ENCODE measurements at regions of chr12 and their contacts with region 1.

Region 1: DNA sequence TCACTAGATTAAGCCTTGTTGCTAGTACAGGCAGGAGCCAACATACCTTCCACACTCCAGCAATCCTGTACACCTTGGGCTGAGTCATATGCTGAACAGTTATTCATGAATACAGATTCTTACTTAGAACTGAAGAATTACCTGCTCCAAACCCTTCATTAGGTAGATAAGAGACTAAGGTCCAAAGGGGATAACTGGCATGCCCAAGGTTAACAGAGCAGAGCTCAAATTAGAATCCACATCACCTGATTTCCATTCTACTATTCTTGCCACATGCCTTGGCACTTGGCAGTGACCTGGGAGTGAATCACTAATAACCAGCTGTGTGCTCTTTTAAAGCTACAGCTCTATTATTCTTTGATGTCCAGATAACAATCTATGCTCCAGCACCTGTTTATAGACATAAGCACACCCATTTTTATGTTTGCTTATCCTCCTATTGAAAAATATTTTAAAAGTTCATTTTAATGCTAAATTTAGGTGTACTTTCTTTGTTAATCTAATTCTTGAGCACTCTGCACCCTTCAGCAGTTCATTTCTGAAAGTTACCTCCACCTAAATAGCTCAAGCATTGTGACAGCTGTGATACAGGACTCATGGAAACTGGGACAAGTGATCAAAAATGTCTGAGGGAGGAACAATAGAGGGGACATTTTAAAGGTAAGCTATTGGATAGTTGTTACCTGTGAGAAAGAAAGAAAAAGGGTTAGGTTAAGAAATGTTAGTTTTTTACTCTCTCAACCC is 19.4 kb downstream of the LPCAT3 start:
- DNase-seq: peak; percentile 63 to 81
- ATAC-seq: peak; percentile 94 to 99
- H3K4me3 ChIP-seq: no peak overlapping the region
- H3K27ac ChIP-seq: peak overlapping the region; percentile 88 to 91 (median 88)
- H3K4me1 ChIP-seq: peaks cover 57 to 62% of the 10 kb centered on the region in 2 donors
- H3K27me3 ChIP-seq: no peaks in the 10 kb centered on the region
- CTCF ChIP-seq: no peak
- POLR2A ChIP-seq: no peak

Region 2: GRCh38 chr12:7018350-7019042 is 19.6 kb after region 1 on chr12 and contains the start of gene LPCAT3:
- in situ Hi-C with region 1: no loop called
- intact Hi-C with region 1: loop called (anchors 1 kb)
- DNase-seq: peak; percentile 94 to 98
- ATAC-seq: peak; percentile 92 to 95
- H3K4me3 ChIP-seq: peak within 1 kb of the TSS; percentile 81 to 95 (median 84)
- H3K27ac ChIP-seq: peak within 1 kb of the TSS; percentile 91 to 98 (median 95)
- H3K4me1 ChIP-seq: peaks cover 35 to 36% of the 10 kb centered on the region in 2 donors
- H3K27me3 ChIP-seq: no peaks in the 10 kb centered on the region
- CTCF ChIP-seq: peak; percentile 79 to 93 (median 89)
- POLR2A ChIP-seq: peak; percentile 81 to 88
- total RNA-seq, gene LPCAT3: 19.4 to 42.8 (median 36.7) TPM

Region 3: DNA sequence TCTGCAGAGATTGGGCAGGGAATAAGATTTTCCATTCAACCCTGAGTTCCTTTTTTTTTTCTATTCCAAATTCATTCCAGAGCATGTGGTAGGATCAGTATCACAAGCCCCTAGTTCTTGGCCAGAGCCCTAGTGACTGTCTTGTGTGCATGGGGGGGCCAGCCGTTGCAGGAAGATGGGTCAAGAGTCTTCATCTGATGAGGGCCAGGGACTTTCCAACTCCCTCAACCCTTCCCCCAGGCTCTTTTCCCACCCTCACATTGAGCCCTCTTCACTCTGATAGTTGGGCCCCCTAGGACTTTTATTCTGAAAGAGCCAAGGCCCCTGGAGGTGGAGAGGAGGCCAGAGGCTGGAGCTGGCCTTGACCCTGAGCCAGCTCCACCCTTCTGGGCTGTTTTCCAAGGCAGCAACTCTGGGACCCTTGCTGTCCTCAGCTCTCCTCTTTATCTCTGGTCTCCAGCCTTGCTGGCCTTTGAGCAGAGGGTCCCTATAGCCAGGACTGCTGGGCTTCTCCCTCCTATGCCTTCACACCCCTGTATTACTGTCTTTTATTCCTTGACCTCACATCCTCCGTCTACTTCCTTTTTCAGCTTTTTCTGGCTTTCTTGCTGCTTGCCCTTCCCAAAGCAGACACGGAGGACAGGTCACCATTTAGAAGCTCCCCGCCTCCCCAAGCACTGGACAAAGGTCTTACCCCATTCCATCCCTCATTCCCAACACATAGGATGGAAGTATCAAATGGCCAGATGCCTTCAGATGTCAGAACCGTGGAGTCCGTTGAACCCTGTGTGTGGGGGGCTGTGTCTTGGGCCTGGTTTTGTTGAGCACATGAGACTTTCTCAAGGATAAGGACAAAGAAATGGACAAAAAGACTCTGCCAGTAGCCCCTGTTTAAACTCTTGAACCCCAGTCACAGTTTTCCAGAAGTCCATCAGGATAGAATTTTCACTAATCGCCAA is 124.2 kb after region 1 on chr12:
- in situ Hi-C with region 1: no loop called
- intact Hi-C with region 1: no loop called
- DNase-seq: no peak
- ATAC-seq: no peak
- H3K4me3 ChIP-seq: no peak overlapping the region
- H3K27ac ChIP-seq: peak overlapping the region in 2 of 4 donors; percentile 15 to 33
- H3K4me1 ChIP-seq: peaks cover 5 to 11% of the 10 kb centered on the region in 2 donors
- H3K27me3 ChIP-seq: peaks cover 0 to 7% (median 0%) of the 10 kb centered on the region in 3 donors
- CTCF ChIP-seq: no peak
- POLR2A ChIP-seq: no peak

Region 4: GRCh38 chr12:7229741-7230140 is 230.9 kb after region 1 on chr12:
- in situ Hi-C with region 1: no loop called
- intact Hi-C with region 1: no loop called
- DNase-seq: no peak
- ATAC-seq: no peak
- H3K4me3 ChIP-seq: no peak overlapping the region
- H3K27ac ChIP-seq: no peak overlapping the region
- H3K4me1 ChIP-seq: no peaks in the 10 kb centered on the region
- H3K27me3 ChIP-seq: no peaks in the 10 kb centered on the region
- CTCF ChIP-seq: no peak
- POLR2A ChIP-seq: no peak

Measured in gastrocnemius medialis (tissue), 4 donors.